Activated CD4-positive, alpha-beta memory T cell treated with anti-CD3 and anti-CD28 coated beads, Interleukin-2, amount 10 ng/mL, durations not matched to agents 7 days and 5 days (primary cell): ENCODE measurements at regions of chr18 and their contacts with region 1.

Region 1: DNA sequence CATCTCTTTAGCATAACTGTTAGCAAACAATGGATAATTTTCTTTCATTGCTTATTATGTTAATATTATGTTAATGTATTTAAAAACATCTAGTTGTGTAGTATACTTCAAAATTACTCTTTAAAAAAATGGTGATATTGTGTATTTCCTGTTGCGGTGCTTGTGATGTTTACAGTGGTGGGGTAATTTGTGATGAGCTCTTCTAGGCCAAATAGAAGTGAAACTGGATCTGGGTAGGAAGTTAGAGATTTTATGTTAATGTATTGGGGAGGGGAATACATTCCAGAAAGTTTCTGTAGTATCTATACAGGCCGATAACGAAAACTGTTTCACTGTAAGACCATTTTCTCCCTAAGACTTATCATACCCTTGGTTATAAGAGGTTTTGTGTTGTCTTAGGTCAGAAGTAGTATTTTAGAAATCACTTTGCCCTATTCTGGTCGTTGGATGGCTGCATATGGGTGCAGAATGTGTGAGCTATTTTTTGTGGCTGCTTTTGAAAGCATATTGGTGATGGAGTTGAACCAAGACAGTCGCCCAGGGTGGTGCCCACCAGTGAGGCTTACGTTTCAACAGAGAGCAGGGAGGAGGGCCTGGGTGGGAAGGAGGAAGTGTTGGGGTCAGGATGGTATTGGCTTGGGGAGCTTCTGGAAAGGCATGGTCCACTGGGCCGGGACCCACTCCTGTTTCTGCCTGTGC is 5.8 kb downstream of the TSHZ1 start:
- DNase-seq: no peak
- H3K4me3 Mint-ChIP-seq: peak overlapping the region; percentile 39
- H3K27ac Mint-ChIP-seq: peak overlapping the region; percentile 73
- H3K4me1 Mint-ChIP-seq: peaks cover 50% of the 10 kb centered on the region
- H3K27me3 Mint-ChIP-seq: no peaks in the 10 kb centered on the region

Region 2: GRCh38 chr18:75226286-75226955 is 10.1 kb after region 1 on chr18:
- CTCF ChIA-PET with region 1: no interaction called
- POLR2A ChIA-PET with region 1: interaction called, 11 read pairs
- DNase-seq: no peak
- H3K4me3 Mint-ChIP-seq: no peak overlapping the region
- H3K27ac Mint-ChIP-seq: no peak overlapping the region
- H3K4me1 Mint-ChIP-seq: peaks cover 18% of the 10 kb centered on the region
- H3K27me3 Mint-ChIP-seq: no peaks in the 10 kb centered on the region

Region 3: GRCh38 chr18:75314115-75314514 is 97.8 kb after region 1 on chr18:
- CTCF ChIA-PET with region 1: no interaction called
- POLR2A ChIA-PET with region 1: no interaction called
- DNase-seq: no peak
- H3K4me3 Mint-ChIP-seq: no peak overlapping the region
- H3K27ac Mint-ChIP-seq: no peak overlapping the region
- H3K4me1 Mint-ChIP-seq: no peaks in the 10 kb centered on the region
- H3K27me3 Mint-ChIP-seq: peaks cover 4% of the 10 kb centered on the region